WTC11 (cell line): ENCODE measurements at regions of chr3 and their contacts with region 1.

Region 1: DNA sequence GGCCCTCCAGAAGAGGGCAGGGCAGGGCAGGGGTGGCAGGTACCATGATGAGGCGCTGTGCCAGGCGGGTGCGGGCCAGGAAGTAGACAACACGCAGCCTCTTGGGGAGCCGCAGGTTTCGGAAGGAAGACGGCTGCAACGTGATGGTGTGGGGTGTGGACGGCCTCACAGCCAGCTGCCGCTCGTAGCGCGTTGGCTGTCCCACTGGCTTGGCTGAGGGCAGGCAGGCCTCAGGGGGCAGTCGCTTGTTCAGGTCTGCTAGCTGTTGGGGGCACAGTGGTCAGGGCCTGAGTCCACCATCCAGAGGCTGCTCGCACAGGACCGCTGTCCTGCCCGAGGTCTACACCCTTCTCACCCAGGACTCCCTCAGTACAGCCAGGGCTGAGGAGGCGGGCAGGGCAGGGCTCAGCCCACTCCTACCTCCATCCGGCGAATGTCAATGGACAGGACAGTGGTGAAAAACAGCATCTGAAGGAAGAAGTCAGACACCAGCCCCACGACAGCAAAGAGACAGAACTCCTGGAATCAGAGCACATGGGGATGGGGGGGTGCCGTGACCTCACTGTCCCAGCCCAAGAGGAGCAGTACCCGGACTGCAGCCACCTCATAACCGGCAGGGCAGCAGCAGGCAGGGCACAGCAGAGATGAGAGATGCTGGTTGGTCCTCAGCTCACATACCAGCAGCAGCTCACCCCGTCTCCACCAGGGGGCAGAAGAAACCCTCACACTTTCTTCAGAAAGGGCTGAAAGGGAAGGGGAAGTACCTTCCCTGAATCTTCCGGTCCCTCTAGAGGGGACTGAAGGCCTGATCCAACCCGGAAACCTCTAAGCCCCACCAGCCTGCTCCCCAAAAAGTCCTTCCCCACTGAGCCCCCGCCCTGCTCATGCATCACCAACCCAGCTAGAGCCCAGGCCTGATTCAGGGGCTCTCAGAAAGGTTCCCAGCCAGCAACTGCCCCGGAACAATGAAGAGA is 40.0 kb downstream of the PTPN23 start:
- DNase-seq: peak; percentile 95
- ATAC-seq: peak; percentile 85
- H3K4me3 Mint-ChIP-seq: no peak overlapping the region
- H3K27ac Mint-ChIP-seq: peak overlapping the region; percentile 93
- H3K4me1 Mint-ChIP-seq: peaks cover 8% of the 10 kb centered on the region
- H3K27me3 Mint-ChIP-seq: no peaks in the 10 kb centered on the region
- CTCF ChIP-seq: peak; percentile 95

Region 2: DNA sequence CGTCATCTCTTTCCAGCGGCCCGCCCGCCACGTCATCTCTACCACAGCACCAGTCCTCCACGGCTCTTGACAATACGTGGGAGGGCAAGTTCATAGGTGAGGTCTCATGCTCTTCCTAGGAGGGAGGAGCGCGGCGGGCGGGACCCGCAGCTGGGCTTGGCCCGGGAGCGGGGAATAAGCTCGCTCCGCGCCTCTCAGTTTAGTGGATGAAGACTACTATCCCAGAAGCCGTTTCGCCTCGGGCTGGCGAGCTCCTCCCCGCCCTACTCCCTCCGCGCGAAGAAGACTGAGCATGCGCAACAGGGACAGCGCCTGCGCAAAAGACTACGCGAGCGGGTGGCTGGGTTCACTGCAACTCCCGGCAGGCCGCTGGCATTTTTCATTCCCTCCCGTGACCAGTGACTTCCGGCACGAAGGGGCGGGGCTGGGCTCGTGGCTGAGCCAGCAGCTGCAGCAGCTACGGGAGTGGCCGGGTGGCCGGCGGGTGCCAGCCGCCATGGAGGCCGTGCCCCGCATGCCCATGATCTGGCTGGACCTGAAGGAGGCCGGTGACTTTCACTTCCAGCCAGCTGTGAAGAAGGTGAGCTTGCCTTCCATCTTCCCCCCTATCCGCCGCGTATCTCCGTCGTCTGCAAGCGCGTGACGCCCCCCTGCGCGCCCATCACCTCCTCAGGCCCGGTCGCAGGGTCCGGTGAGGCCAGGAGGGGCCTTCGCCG is 40.0 kb before region 1 on chr3 and contains the start of gene PTPN23:
- CTCF ChIA-PET with region 1: interaction called, 15 read pairs
- POLR2A ChIA-PET with region 1: no interaction called
- DNase-seq: peak; percentile 98
- ATAC-seq: peak; percentile 79
- H3K4me3 Mint-ChIP-seq: peak within 1 kb of the TSS; percentile 100
- H3K27ac Mint-ChIP-seq: peak within 1 kb of the TSS; percentile 100
- H3K4me1 Mint-ChIP-seq: peaks cover 21% of the 10 kb centered on the region
- H3K27me3 Mint-ChIP-seq: no peaks in the 10 kb centered on the region
- CTCF ChIP-seq: no peak
- total RNA-seq, gene PTPN23: 44.1 to 53.5 TPM (median 49.8 TPM) in 3 replicates

Region 3: GRCh38 chr3:47404955-47405790 is 15.6 kb before region 1 on chr3:
- CTCF ChIA-PET with region 1: interaction called, 49 read pairs
- POLR2A ChIA-PET with region 1: interaction called, 3 read pairs
- DNase-seq: no peak
- ATAC-seq: no peak
- H3K4me3 Mint-ChIP-seq: no peak overlapping the region
- H3K27ac Mint-ChIP-seq: no peak overlapping the region
- H3K4me1 Mint-ChIP-seq: no peaks in the 10 kb centered on the region
- H3K27me3 Mint-ChIP-seq: no peaks in the 10 kb centered on the region
- CTCF ChIP-seq: no peak

Region 4: GRCh38 chr3:47440131-47440530 is 19.3 kb after region 1 on chr3:
- CTCF ChIA-PET with region 1: interaction called, 17 read pairs
- POLR2A ChIA-PET with region 1: no interaction called
- DNase-seq: no peak
- ATAC-seq: peak; percentile 82
- H3K4me3 Mint-ChIP-seq: no peak overlapping the region
- H3K27ac Mint-ChIP-seq: no peak overlapping the region; the same call in 1 of the 2 replicates
- H3K4me1 Mint-ChIP-seq: peaks cover 13% of the 10 kb centered on the region
- H3K27me3 Mint-ChIP-seq: no peaks in the 10 kb centered on the region
- CTCF ChIP-seq: no peak

Region 5: DNA sequence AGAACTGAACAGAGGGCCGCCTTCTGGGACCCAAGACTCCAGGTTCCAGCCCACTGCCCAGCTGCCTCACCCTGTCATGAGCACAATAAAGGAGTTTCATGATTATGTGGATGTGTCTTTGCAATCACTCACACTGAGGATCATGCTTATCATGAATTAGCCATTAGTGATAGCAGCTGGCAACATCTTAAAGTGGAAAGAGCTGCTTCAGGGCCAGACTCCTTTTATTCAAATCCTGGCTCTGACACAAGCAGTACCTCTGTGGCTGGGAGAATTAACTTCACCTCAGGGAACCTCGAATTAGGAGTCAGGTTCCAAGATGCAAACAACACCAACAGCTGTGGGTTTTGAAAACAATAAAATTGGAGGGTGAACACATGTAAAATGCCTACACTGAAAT is 61.6 kb after region 1 on chr3:
- CTCF ChIA-PET with region 1: interaction called, 27 read pairs
- POLR2A ChIA-PET with region 1: no interaction called
- DNase-seq: no peak
- ATAC-seq: peak; percentile 12
- H3K4me3 Mint-ChIP-seq: peak overlapping the region; percentile 57
- H3K27ac Mint-ChIP-seq: peak overlapping the region; percentile 96
- H3K4me1 Mint-ChIP-seq: peaks cover 35% of the 10 kb centered on the region
- H3K27me3 Mint-ChIP-seq: no peaks in the 10 kb centered on the region
- CTCF ChIP-seq: no peak